Common myeloid progenitor, CD34-positive (primary cell): ENCODE measurements at regions of chr17 and their contacts with region 1.

Region 1: DNA sequence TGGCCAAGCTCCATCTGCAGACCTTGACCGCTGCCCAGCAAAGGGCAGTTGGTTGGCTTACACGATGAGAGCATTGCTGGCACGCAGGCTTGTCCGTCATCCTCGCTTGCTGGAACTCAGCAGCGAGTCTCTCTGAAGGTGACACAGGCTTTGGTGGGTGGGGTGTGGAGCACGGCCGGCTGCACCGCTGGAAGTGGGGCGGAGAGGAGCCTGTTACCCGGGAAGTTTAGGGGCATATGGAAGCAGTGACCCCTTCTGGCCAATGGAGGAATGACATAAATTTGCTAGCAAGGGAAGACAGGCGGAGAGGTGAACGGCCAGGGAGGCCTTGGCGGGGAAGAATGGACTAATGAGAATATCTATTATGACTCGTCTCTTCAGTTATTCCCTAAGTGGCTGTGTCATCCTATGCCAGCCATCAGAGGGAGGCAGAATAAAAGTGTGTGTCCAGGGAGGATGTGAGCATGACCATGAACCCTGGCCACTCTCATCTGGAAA is 65.9 kb upstream of the SDK2 start:
- DNase-seq: peak; percentile 75 to 84 (median 76)
- H3K4me3 ChIP-seq: peak overlapping the region in 1 of 7 experiments; percentile 12
- H3K27ac ChIP-seq: no peak overlapping the region
- H3K4me1 ChIP-seq: peaks cover 0 to 17% (median 6%) of the 10 kb centered on the region in 4 experiments
- H3K27me3 ChIP-seq: peaks cover 0 to 9% (median 0%) of the 10 kb centered on the region in 5 experiments

Region 2: DNA sequence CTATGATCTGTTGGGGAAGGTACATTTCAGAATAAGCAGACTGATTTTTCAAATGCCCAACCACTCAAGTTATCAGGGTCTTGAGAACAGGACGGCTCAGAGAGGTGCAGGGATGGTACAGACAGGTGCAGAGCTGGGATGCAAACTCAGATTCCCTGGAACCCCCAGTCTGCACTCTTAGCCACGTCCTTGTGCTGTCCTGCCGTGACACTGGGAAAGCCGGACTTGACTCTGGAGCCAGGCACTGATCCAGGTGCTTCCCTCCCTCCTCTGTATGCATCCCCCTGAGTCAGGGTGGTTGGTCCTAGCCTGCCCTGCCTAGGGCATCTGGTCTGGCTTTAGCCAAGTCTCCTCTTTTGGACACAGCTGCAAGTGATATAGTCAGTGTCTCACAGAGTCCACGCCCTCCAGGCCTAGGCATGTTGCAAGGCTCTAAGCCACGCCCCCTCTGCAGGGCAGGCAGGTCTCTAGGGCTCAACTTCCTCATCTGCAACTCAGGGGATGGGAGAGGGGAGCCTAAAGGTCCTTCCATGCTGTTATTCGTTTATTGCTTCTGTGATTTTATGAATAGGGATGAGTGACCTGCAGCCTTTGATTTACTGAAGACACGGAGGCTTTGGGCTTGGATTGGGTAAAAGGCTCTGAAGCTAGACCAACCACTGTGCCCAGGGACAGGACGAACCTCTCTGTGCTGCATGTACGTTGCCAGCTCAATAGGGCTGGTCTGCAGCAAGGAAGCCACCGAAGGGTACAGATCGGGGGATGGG is 163.2 kb before region 1 on chr17:
- CTCF ChIA-PET with region 1: no interaction called
- POLR2A ChIA-PET with region 1: no interaction called
- DNase-seq: peak; percentile 75 to 93 (median 90)
- H3K4me3 ChIP-seq: no peak overlapping the region
- H3K27ac ChIP-seq: no peak overlapping the region
- H3K4me1 ChIP-seq: peaks cover 2 to 52% (median 25%) of the 10 kb centered on the region in 4 experiments
- H3K27me3 ChIP-seq: no peaks in the 10 kb centered on the region

Region 3: DNA sequence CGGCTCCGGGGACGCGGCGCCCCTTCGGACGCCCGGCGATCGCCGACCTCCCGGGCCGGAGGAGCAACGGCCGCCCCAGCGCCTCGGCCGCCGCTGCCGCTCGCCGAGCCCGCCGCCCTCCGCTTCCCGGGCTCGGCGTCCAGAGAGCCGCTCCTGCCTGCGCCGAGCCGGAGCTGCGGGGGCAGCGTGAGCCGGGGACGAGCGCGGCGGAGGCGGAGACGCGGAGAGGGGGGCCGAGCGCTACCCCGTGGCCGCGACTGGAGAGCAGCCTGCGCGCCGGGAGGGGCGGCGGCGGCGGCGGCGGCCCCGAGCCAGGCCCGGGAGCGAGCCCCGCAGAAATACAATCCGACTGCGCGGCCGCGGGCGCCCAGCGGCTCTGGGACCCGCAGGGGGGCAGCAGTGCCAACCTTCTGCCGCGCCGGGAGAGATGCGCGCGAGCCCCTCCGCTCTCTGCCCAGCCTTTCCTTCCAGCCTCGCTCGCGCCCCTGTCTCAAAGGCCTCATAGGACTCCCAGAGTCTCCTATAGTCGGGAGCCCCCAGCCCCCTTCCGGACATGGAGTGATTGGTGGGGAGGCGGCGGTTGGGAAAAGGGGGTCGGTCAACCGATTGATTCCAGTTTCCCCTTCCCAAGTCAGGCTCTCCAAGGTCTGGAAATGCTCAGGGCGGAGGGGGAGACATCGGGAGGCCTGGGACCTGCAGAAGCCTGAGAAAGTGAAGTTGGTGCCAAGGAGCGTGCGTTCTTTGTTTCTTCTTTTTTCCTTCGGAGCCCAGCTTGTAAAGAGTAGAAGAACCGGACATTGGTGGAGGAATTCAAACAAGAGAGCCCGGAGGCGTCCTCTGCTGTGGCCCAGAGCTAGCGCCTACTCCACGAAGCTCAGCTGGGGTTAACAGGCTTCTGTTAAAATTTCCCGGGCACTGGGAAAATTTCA is 64.8 kb before region 1 on chr17:
- CTCF ChIA-PET with region 1: interaction called, 28 read pairs
- POLR2A ChIA-PET with region 1: no interaction called
- DNase-seq: peak; percentile 63 to 84 (median 78)
- H3K4me3 ChIP-seq: peak overlapping the region; percentile 5 to 83 (median 71)
- H3K27ac ChIP-seq: no peak overlapping the region
- H3K4me1 ChIP-seq: peaks cover 2 to 36% (median 23%) of the 10 kb centered on the region in 4 experiments
- H3K27me3 ChIP-seq: peaks cover 0 to 51% (median 7%) of the 10 kb centered on the region in 5 experiments

Region 4: DNA sequence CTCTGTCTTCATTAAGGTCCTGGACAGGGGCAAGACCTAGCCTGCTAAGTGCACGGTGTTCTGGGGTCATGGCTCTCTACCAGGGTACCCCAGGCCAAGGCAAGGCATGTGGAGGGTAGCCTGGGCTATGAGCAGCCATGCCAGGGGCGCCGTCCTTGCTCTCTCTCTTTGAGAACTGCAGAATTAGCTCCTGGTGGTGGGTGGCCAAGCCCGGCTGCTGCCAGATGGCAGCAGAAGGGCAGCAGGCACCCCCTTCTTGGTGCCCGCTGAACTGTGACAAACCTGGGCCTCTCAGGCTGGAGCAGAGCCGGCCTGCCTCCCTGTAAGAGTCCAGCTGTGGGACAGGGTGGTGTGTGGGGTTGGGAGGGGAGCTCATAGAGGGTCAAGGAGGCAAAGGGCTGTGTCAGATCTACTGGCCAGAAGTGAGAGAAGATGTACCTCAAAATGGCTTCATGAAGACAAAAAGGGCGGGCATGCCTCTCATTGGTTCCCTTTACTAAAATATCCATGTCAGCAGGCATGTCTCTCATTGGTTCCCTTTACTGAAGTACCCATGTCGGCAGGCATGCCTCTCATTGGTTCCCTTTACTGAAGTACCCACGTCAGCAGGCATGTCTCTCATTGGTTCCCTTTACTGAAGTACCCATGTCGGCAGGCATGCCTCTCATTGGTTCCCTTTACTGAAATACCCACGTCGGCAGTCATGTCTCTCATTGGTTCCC is 15.8 kb after region 1 on chr17:
- CTCF ChIA-PET with region 1: interaction called, 16 read pairs
- POLR2A ChIA-PET with region 1: no interaction called
- DNase-seq: no peak
- H3K4me3 ChIP-seq: peak overlapping the region in 1 of 7 experiments; percentile 13
- H3K27ac ChIP-seq: no peak overlapping the region
- H3K4me1 ChIP-seq: peaks cover 0 to 16% (median 5%) of the 10 kb centered on the region in 4 experiments
- H3K27me3 ChIP-seq: peaks cover 0 to 2% (median 0%) of the 10 kb centered on the region in 5 experiments